ENCODE measurements at regions of chr6 and their contacts with region 1.

Region 1: GRCh38 chr6:52410991-52411390 is 9.2 kb upstream of the EFHC1 start:
- DNase-seq: no peak
- H3K4me3 ChIP-seq: no peak overlapping the region
- H3K27ac ChIP-seq: no peak overlapping the region
- H3K4me1 ChIP-seq: no peaks in the 10 kb centered on the region
- H3K27me3 ChIP-seq: no peaks in the 10 kb centered on the region
- CTCF ChIP-seq: no peak

Region 2: GRCh38 chr6:52457096-52457495 is 46.1 kb after region 1 on chr6:
- intact Hi-C with region 1: no loop called
- DNase-seq: no peak
- H3K4me3 ChIP-seq: no peak overlapping the region
- H3K27ac ChIP-seq: no peak overlapping the region
- H3K4me1 ChIP-seq: no peaks in the 10 kb centered on the region
- H3K27me3 ChIP-seq: no peaks in the 10 kb centered on the region
- CTCF ChIP-seq: no peak

Region 3: GRCh38 chr6:52664186-52664990 is 253.4 kb after region 1 on chr6:
- intact Hi-C with region 1: loop called (anchors 5 kb)
- DNase-seq: peak; percentile 96 to 98 (median 96)
- H3K4me3 ChIP-seq: peak overlapping the region; percentile 62 to 81 (median 67)
- H3K27ac ChIP-seq: peak overlapping the region; percentile 41 to 63
- H3K4me1 ChIP-seq: peaks cover 0 to 10% (median 6%) of the 10 kb centered on the region in 3 donors
- H3K27me3 ChIP-seq: no peaks in the 10 kb centered on the region
- CTCF ChIP-seq: no peak